Ovary (tissue), 10 donors: ENCODE measurements at regions of chr16 and their contacts with region 1.

Region 1: DNA sequence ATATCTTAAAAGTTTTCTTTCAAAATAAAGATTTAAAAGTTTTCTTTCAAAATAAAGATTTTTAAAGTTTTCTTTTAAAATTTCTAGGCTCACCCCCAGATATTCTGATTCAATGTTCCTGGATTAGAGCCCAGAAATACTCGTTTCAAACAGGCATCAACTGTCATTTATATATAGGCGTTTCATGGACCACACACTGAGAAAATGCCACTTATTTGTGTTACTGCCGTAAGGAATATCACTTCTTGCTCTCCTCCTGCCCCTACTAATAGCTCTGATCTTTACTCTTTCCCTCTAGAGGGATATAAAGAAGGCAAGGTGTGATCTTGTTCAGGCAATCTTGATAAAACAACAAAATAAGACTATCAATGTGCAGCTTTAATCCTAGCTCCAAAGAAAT is 1324.1 kb downstream of the CDH8 start:
- DNase-seq: no peak
- H3K4me3 ChIP-seq: no peak overlapping the region
- H3K27ac ChIP-seq: no peak overlapping the region
- H3K4me1 ChIP-seq: no peaks in the 10 kb centered on the region
- H3K27me3 ChIP-seq: no peaks in the 10 kb centered on the region
- CTCF ChIP-seq: no peak
- EP300 ChIP-seq: no peak
- POLR2A ChIP-seq: no peak

Region 2: GRCh38 chr16:58906981-58907715 is 1805.0 kb before region 1 on chr16:
- intact Hi-C with region 1: loop called in 1 of 4 experiments (anchors 5 kb)
- DNase-seq: no peak
- H3K4me3 ChIP-seq: no peak overlapping the region
- H3K27ac ChIP-seq: no peak overlapping the region
- H3K4me1 ChIP-seq: no peaks in the 10 kb centered on the region
- H3K27me3 ChIP-seq: no peaks in the 10 kb centered on the region
- CTCF ChIP-seq: no peak
- EP300 ChIP-seq: no peak
- POLR2A ChIP-seq: no peak